CD4-positive, alpha-beta T cell (primary cell): ENCODE measurements at regions of chr13 and their contacts with region 1.

Region 1: DNA sequence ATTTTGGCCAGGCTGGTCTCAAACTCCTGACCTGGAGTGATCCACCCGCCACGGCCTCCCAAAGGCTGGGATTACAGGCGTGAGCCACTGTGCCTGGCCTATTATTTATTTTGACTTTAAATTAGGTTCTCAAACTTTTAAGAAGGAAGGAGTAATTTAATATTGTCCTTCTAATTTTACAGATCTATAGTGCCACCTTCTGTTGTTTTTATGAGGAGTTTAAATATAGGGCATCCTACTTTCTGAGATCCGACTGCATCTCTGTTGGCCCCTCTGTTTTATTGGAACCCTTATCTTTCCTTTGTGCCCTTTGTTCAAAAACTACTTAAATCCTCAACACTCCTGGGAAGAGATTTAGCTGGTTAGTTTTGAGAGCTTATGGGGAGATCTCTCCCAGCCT is 25.4 kb upstream of the ZMYM5 start:
- DNase-seq: peak in 3 of 14 experiments; percentile 24 to 29 (median 26)
- ATAC-seq: no peak
- H3K4me3 ChIP-seq: no peak overlapping the region
- H3K4me3 Mint-ChIP-seq: no peak overlapping the region
- H3K27ac ChIP-seq: no peak overlapping the region
- H3K27ac Mint-ChIP-seq: no peak overlapping the region
- H3K4me1 ChIP-seq: no peaks in the 10 kb centered on the region
- H3K4me1 Mint-ChIP-seq: no peaks in the 10 kb centered on the region
- H3K27me3 ChIP-seq: no peaks in the 10 kb centered on the region
- H3K27me3 Mint-ChIP-seq: no peaks in the 10 kb centered on the region
- CTCF ChIP-seq: peak; percentile 59

Region 2: DNA sequence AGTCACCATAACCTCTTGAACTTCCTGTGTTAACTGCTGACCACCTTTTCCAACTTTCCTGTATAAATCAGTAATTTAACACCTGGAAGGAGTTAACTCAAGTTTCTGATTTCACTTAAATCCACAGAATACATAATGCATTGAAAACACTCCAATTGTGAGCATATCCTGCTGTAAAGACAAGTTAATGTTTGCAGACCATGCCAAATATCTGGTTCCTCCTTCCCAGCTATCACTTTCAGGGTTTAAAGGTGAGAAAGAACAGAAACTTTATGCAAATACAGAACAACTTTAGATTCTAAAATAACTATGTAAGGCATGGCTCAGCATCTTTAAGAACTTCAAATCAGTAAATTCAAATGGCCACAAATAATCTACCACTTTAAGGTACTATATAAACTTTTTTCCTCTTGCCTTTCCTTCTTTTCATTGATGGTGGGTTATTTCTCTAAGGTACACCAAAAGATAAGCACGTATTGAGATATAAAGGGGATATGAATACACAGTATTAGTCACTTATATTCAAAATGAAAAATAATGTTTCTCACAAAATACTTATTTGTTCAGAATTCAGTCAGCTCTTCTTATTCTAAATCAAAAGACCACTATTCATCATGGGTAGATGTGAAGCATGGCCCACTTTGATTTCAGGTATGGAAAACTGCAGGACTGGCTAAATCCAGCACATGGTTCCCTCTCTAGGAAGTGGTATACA is 320.8 kb before region 1 on chr13:
- CTCF ChIA-PET with region 1: no interaction called
- POLR2A ChIA-PET with region 1: no interaction called
- intact Hi-C with region 1: loop called in 1 of 2 experiments (anchors 10 kb)
- DNase-seq: no peak
- ATAC-seq: no peak
- H3K4me3 ChIP-seq: no peak overlapping the region
- H3K4me3 Mint-ChIP-seq: no peak overlapping the region
- H3K27ac ChIP-seq: no peak overlapping the region
- H3K27ac Mint-ChIP-seq: no peak overlapping the region
- H3K4me1 ChIP-seq: peaks cover 4% of the 10 kb centered on the region
- H3K4me1 Mint-ChIP-seq: no peaks in the 10 kb centered on the region
- H3K27me3 ChIP-seq: peaks cover 0 to 3% of the 10 kb centered on the region in 2 experiments
- H3K27me3 Mint-ChIP-seq: no peaks in the 10 kb centered on the region
- CTCF ChIP-seq: no peak